Heart left ventricle (tissue), 16 donors: ENCODE measurements at regions of chr17 and their contacts with region 1.

Region 1: GRCh38 chr17:39687811-39688518 is at the start of gene PGAP3:
- DNase-seq: peak; percentile 89 to 92 (median 90)
- ATAC-seq: peak; percentile 86 to 97 (median 96)
- H3K4me3 ChIP-seq: peak within 1 kb of the TSS; percentile 31 to 95 (median 75)
- H3K27ac ChIP-seq: peak within 1 kb of the TSS; percentile 81 to 99 (median 90)
- H3K4me1 ChIP-seq: peaks cover 0 to 18% (median 12%) of the 10 kb centered on the region in 12 donors
- H3K27me3 ChIP-seq: no peaks in the 10 kb centered on the region
- CTCF ChIP-seq: peak in 1 of 12 donors; percentile 20
- POLR2A ChIP-seq: peak in 1 of 2 donors; percentile 67
- total RNA-seq, gene PGAP3: 8.0 to 18.8 (median 13.1) TPM

Region 2: DNA sequence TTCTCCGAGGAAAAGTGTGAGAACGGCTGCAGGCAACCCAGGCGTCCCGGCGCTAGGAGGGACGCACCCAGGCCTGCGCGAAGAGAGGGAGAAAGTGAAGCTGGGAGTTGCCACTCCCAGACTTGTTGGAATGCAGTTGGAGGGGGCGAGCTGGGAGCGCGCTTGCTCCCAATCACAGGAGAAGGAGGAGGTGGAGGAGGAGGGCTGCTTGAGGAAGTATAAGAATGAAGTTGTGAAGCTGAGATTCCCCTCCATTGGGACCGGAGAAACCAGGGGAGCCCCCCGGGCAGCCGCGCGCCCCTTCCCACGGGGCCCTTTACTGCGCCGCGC is 11.8 kb after region 1 on chr17 and contains the start of gene ERBB2:
- intact Hi-C with region 1: loop called in 1 of 10 experiments (anchors 1 kb)
- DNase-seq: peak; percentile 74 to 83 (median 78)
- ATAC-seq: peak; percentile 66 to 87 (median 86)
- H3K4me3 ChIP-seq: peak within 1 kb of the TSS; percentile 71 to 99 (median 90)
- H3K27ac ChIP-seq: peak within 1 kb of the TSS; percentile 54 to 94 (median 90)
- H3K4me1 ChIP-seq: peaks cover 0 to 48% (median 16%) of the 10 kb centered on the region in 12 donors
- H3K27me3 ChIP-seq: peaks cover 0 to 13% (median 0%) of the 10 kb centered on the region in 9 donors
- CTCF ChIP-seq: no peak
- POLR2A ChIP-seq: peak in 1 of 2 donors; percentile 58
- total RNA-seq, gene ERBB2: 51.4 to 95.1 (median 79.3) TPM